ENCODE measurements at regions of chr3 and their contacts with region 1.

Region 1: DNA sequence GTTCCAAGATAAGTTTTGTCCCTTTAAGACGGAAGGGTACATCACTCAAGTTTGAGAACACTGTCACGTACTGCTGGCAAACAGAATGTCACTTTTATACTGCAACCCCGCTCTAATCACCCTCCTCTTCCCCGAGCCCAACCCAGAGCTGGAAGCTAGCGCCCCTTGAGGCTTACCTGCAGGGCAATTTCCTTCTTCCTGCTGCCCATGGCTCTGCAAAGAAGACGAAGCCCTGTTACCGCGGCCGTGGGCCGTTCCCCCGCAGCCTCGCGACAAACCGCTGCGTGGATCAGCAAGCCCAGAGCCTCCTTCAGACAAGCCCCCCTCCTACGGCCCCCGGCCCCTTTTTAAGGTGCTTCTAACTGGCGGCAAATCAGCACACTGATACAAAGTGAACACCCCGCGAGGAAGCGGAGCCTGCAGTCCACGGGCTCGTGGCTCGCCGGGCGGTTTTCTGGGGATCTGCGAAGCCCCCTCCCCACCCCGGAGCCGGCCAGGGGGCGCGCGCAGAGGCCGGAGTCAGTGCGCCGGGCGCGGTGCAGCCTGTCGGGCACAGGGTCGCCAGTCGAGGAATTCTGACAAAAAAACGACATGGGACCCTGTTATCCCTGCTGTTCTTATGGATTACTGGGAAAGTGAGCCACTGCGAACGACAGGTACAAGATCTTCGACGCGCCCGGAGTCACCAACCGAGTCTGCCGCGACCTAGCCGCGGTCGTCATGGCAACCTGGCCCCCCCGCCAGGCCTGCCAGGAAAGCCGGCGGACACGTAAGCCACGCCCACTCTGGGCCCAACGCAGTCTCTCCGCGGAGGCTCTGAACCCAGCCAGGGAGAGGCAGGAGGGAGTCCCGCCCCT is at the start of gene NME9:
- DNase-seq: peak; percentile 75
- ATAC-seq: peak; percentile 84
- H3K4me3 ChIP-seq: peak within 1 kb of the TSS; percentile 83
- H3K27ac ChIP-seq: no peak within 1 kb of the TSS
- H3K4me1 ChIP-seq: peaks cover 7% of the 10 kb centered on the region; the same call in 1 of the 2 replicates
- H3K27me3 ChIP-seq: no peaks in the 10 kb centered on the region
- CTCF ChIP-seq: peak; percentile 62
- total RNA-seq, gene NME9: 0.40 TPM in 1 of 2 replicates, not detected in the other

Region 2: GRCh38 chr3:138180375-138181029 is 148.9 kb before region 1 on chr3:
- CTCF ChIA-PET with region 1: no interaction called
- POLR2A ChIA-PET with region 1: no interaction called
- intact Hi-C with region 1: loop called (anchors 1 kb)
- DNase-seq: peak; percentile 59
- ATAC-seq: peak; percentile 93
- H3K4me3 ChIP-seq: no peak overlapping the region
- H3K27ac ChIP-seq: no peak overlapping the region
- H3K4me1 ChIP-seq: peaks cover 9% of the 10 kb centered on the region; the same call in 1 of the 2 replicates
- H3K27me3 ChIP-seq: no peaks in the 10 kb centered on the region
- CTCF ChIP-seq: peak; percentile 76

Region 3: GRCh38 chr3:138186803-138187295 is 142.5 kb before region 1 on chr3:
- CTCF ChIA-PET with region 1: no interaction called
- POLR2A ChIA-PET with region 1: no interaction called
- intact Hi-C with region 1: loop called (anchors 1 kb)
- DNase-seq: peak; percentile 81
- ATAC-seq: peak; percentile 36
- H3K4me3 ChIP-seq: peak overlapping the region; percentile 81
- H3K27ac ChIP-seq: peak overlapping the region; percentile 75
- H3K4me1 ChIP-seq: peaks cover 35% of the 10 kb centered on the region
- H3K27me3 ChIP-seq: no peaks in the 10 kb centered on the region
- CTCF ChIP-seq: no peak

Region 4: DNA sequence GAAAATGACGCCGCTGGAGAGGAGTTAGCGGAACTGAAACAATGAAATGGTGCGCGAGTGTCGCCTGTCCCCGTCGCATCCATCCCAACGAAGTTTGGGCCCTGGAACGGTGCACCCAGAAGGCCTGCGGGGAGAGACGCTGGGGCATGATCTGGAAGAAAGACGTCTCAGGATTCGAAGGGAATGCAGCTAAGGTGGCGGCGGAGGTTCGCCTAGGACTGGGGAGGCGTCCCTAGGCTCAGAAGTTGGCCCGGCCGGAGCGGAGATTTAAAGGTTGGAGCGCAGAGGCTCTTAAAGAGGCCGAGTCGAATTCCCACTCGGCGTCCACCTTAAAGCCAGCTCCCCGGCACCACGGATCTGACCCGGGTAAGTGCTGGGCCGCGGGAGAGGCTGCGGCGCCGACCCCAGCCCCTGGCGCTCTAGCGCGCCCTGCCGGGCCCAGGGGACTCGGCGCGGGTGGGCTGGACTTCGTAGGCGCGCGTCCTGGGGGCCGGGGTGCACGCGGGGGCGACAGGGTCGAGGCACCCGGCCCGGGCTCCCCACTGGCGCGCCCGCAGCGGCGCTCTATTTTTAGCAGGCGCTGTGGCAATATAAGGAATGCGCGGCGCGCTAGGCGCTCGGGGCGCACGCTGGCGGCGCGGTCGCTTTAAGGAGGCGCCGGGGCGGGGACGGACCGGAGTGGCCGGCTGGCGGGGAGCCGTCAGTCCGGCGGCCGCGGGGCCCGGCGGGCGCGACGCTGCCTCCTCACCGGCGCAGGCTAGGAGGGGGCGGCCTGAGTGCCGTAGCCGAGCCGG is 18.8 kb after region 1 on chr3 and contains the start of gene MRAS:
- CTCF ChIA-PET with region 1: no interaction called
- POLR2A ChIA-PET with region 1: no interaction called
- intact Hi-C with region 1: loop called (anchors 1 kb)
- DNase-seq: peak; percentile 57
- ATAC-seq: peak; percentile 78
- H3K4me3 ChIP-seq: peak within 1 kb of the TSS; percentile 84
- H3K27ac ChIP-seq: no peak within 1 kb of the TSS
- H3K4me1 ChIP-seq: no peaks in the 10 kb centered on the region
- H3K27me3 ChIP-seq: no peaks in the 10 kb centered on the region
- CTCF ChIP-seq: peak; percentile 39; the same call in 1 of the 2 replicates
- total RNA-seq, gene MRAS: 2.8 and 5.3 TPM in 2 replicates

Region 5: GRCh38 chr3:138389841-138390586 is 60.7 kb after region 1 on chr3:
- CTCF ChIA-PET with region 1: no interaction called
- POLR2A ChIA-PET with region 1: no interaction called
- intact Hi-C with region 1: loop called (anchors 5 kb)
- DNase-seq: peak; percentile 83
- ATAC-seq: peak; percentile 93
- H3K4me3 ChIP-seq: no peak overlapping the region
- H3K27ac ChIP-seq: peak overlapping the region; percentile 41
- H3K4me1 ChIP-seq: peaks cover 17% of the 10 kb centered on the region
- H3K27me3 ChIP-seq: no peaks in the 10 kb centered on the region
- CTCF ChIP-seq: no peak

Region 6: DNA sequence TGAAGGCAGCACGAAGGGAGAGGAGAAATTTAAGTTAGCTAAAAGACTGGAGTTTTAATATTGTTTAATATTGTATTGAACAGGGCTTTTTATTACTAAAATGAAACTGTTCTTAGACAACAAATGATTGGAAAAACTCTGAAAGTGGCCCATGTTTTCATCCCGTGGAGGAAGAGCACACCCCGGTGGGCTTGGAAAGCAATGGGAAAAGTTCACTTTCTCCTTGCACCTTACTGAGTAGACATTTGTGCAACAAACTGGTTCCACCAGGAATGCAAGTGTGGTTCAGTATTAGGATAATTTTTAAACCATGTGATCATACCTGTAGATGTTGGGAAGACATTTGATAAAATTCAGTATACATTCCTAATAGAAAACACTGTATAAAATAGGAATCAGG is 96.9 kb after region 1 on chr3:
- CTCF ChIA-PET with region 1: no interaction called
- POLR2A ChIA-PET with region 1: no interaction called
- intact Hi-C with region 1: loop called (anchors 1 kb)
- DNase-seq: peak; percentile 35
- ATAC-seq: no peak; the same call in 1 of the 2 replicates
- H3K4me3 ChIP-seq: no peak overlapping the region
- H3K27ac ChIP-seq: no peak overlapping the region
- H3K4me1 ChIP-seq: no peaks in the 10 kb centered on the region
- H3K27me3 ChIP-seq: no peaks in the 10 kb centered on the region
- CTCF ChIP-seq: peak; percentile 49; the same call in 1 of the 2 replicates

Region 7: DNA sequence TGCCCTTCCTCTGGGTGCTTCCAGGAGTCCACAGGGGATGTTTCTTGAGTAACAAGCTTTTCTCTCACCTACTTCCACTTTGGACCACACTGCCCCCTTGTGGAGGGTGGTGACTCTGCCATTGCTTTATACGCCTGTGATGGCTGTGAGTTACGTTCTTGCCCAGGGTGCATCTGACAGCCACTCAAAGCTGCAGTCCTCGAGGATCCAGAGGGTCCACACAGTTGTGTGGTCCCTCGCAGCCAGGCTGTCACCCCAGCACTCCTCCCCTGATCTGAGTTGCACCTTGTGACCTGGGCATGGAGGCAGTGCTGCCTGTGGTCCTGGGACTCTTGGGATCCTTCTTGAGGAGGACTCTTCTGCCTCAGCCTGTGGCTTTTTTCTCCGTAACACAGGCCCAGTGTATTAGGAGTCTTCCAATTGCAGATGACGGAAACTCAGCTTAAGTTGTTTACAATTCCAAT is 594.2 kb after region 1 on chr3:
- CTCF ChIA-PET with region 1: no interaction called
- POLR2A ChIA-PET with region 1: no interaction called
- intact Hi-C with region 1: loop called (anchors 5 kb)
- DNase-seq: peak; percentile 88
- ATAC-seq: peak; percentile 47
- H3K4me3 ChIP-seq: 0 out of 2 replicates have a peak overlapping the region, but pooled peaks have one; percentile 30
- H3K27ac ChIP-seq: no peak overlapping the region
- H3K4me1 ChIP-seq: peaks cover 17% of the 10 kb centered on the region
- H3K27me3 ChIP-seq: no peaks in the 10 kb centered on the region
- CTCF ChIP-seq: peak; percentile 82

Measured in PC-3 (cell line).